Activated T-helper 1 cell treated with anti-CD3 and anti-CD28 coated beads, Interleukin-12 subunit alpha, Interleukin-12 subunit beta, Interleukin-2, Interleukin-4 antibody, amounts not matched to agents 30 ng/mL and 10 ng/mL and 1 ng/mL, durations not matched to agents 14 hours and 24 hours and 36 hours (primary cell): ENCODE measurements at regions of chr2 and their contacts with region 1.

Region 1: GRCh38 chr2:210072922-210073509 is 70.6 kb downstream of the RPE start:
- DNase-seq: no peak
- H3K4me3 Mint-ChIP-seq: no peak overlapping the region
- H3K27ac Mint-ChIP-seq: no peak overlapping the region
- H3K4me1 Mint-ChIP-seq: no peaks in the 10 kb centered on the region
- H3K27me3 Mint-ChIP-seq: peaks cover 2% of the 10 kb centered on the region

Region 2: DNA sequence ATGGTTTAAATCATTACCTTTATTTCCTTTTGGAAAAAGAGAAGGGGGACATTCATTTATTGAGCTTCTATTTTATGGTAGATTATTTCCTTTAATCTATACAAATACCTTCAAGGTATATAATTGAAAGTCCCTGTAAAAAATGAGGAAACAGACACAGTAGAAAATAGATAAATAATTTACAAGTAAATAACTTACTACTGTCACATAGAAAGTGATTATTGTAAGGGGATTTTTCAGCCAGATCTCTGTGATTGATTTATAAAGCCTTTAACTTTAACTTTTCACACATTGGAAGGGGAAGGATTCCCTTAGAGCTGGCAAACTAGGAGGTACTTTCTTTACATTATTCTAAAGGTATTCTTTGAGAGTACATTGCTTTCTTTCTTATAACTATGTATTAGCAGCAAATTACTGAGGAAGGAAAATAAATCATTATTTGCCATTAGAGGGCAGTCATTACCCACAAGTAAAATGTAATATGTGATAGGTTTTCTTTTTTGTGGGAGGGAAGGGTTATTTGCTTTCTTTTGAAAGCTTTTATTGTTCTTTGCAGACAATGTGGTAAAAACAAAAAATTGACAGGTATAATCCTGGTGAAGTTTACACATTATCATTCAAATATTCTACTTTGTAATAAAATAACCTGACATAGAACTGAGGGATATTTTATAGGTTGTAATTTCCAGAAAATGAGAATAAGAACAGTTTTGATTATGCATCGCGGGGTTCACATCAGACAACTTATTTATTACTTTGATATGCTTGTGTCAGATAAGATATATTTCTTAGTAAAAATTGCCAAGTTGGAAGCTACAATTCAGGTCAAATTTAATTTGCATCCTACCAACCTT is 95.4 kb before region 1 on chr2:
- intact Hi-C with region 1: loop called (anchors 5 kb)
- DNase-seq: no peak
- H3K4me3 Mint-ChIP-seq: no peak overlapping the region
- H3K27ac Mint-ChIP-seq: no peak overlapping the region
- H3K4me1 Mint-ChIP-seq: no peaks in the 10 kb centered on the region
- H3K27me3 Mint-ChIP-seq: peaks cover 12% of the 10 kb centered on the region